ENCODE measurements at regions of chr15 and their contacts with region 1.

Region 1: DNA sequence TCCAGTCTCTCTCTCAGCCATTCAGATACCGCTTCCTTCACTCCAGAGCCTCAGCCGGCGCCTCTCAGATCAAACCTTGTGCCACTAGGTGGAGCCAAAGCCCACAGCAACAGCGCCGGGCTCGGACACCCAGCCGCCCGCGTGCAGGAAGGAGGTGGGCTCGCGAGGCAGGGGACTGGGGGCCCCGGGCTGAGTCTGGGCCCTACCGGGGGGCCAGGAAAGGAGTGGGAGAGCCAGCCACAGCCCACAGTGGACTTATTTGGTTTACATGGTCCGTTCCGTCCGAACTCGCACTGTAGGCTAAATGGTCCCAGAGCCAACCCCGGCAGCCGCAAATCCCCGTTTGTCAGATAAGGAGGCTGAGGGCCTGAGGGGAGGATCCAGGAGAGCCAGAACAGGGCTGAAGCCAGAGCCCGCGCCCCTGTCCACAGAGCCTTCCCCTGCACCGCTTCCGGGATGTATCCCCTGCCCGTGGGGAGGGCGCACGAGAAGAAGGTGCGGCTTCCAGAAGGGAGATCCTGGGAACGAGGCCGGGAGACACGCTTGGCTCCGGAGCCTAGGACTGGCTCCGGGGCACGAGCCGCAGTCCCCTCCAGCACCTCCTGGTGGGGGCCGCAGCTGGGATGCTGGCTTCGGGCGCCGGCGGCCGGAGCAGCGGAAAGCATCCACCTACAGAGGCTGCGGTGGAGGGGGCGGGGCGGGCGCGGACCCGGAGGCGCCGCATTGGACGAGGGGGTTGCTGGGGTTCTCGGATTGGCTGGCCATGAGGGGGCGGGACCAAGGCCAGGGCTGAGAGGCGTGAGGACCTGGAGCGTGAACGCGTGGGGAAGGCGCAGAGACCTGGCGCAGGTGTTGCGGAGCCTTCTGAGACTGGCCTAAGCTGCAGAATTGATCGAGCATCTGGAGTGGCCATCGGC is 6.5 kb upstream of the CYP11A1 start:
- DNase-seq: peak; percentile 93
- ATAC-seq: peak; percentile 98

Region 2: GRCh38 chr15:74615508-74616365 is 241.7 kb after region 1 on chr15 and contains the start of gene CLK3:
- intact Hi-C with region 1: loop called (anchors 5 kb)
- DNase-seq: peak; percentile 99
- ATAC-seq: peak; percentile 90
- total RNA-seq, gene CLK3: 81.7 TPM

Region 3: DNA sequence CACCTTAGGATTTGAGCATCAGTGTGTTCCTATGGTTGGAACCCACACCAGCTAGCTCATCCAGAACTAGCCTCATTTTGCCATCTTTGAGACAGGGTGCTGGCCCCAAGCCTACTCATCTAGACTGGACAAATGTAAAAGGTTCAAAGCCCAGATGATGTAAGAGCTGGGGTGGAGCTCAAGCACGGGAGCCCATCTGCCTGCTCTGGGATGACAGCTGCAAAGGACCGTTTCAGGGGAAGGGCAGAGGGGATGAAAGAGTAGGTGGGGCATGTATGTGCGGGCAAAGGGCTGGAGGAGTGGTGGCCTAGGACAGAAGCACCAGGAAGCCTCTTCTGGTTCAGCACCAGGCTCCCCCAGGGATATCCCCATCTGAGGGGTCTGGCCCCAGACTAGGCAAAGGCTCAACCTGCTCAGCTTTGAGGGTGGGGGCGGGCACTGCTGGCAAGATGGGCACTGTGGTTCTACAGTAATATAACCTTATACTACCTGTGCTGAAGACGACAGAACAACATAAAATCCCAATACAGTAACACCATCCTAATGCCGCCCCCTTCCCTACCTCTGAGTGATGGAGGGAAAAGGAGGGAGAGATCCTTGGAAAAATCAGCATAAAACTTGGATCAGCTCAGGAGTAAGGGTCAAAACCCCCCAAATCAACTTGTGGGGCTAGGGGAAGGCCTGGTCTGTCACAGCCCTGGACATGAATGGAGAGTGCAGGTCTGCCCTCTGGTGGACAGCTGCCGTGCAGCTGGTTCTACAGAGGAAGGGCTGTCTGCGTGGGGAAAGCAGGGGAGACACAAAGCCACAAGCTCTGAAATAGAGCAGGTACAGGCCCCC is 257.6 kb after region 1 on chr15:
- intact Hi-C with region 1: loop called (anchors 5 kb)
- DNase-seq: peak; percentile 81
- ATAC-seq: peak; percentile 70